Transverse colon (tissue), 4 donors: ENCODE measurements at regions of chr4 and their contacts with region 1.

Region 1: GRCh38 chr4:113394730-113395530 is 345.5 kb downstream of the ANK2 start:
- DNase-seq: peak; percentile 35
- H3K4me3 ChIP-seq: no peak overlapping the region
- H3K27ac ChIP-seq: no peak overlapping the region
- H3K4me1 ChIP-seq: peaks cover 0 to 8% (median 4%) of the 10 kb centered on the region in 4 donors
- H3K27me3 ChIP-seq: no peaks in the 10 kb centered on the region
- CTCF ChIP-seq: peak; percentile 84 to 90 (median 85)
- EP300 ChIP-seq: no peak
- POLR2A ChIP-seq: no peak

Region 2: GRCh38 chr4:113349430-113349829 is 45.5 kb before region 1 on chr4:
- in situ Hi-C with region 1: no loop called
- intact Hi-C with region 1: no loop called
- DNase-seq: no peak
- H3K4me3 ChIP-seq: no peak overlapping the region
- H3K27ac ChIP-seq: no peak overlapping the region
- H3K4me1 ChIP-seq: no peaks in the 10 kb centered on the region
- H3K27me3 ChIP-seq: no peaks in the 10 kb centered on the region
- CTCF ChIP-seq: no peak
- EP300 ChIP-seq: no peak
- POLR2A ChIP-seq: no peak

Region 3: GRCh38 chr4:113445286-113445685 is 50.4 kb after region 1 on chr4:
- in situ Hi-C with region 1: no loop called
- intact Hi-C with region 1: no loop called
- DNase-seq: peak; percentile 21
- H3K4me3 ChIP-seq: no peak overlapping the region
- H3K27ac ChIP-seq: peak overlapping the region; percentile 50 to 70 (median 62)
- H3K4me1 ChIP-seq: peaks cover 0 to 34% (median 8%) of the 10 kb centered on the region in 4 donors
- H3K27me3 ChIP-seq: no peaks in the 10 kb centered on the region
- CTCF ChIP-seq: no peak
- EP300 ChIP-seq: no peak
- POLR2A ChIP-seq: no peak

Region 4: DNA sequence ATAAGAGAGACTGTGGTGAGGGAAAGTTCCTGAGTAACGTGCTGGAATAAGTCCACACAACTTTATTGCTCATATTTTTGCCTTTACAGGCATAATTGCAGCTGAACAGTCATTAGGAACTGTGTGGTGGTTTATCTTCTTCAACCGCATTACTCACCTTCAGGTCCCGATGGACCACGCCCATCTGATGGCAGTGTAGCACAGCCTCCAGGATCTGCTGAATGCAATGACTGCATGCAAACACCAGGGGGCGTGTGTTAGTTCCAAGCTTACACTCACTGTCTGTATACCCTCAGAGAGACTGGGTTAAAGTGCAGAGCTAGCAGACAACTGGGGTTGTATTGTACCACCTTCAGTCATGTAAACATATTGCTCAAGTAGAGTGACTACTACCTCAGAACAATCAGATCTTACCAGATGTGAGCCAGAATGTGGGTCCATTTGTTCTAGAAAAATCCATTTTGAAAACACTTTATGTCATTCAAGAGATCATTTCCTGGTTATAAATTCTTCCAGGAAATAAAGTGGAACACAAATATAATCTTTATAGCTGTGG is 152.6 kb after region 1 on chr4:
- in situ Hi-C with region 1: no loop called
- intact Hi-C with region 1: loop called (anchors 10 kb)
- DNase-seq: peak; percentile 95
- H3K4me3 ChIP-seq: no peak overlapping the region
- H3K27ac ChIP-seq: peak overlapping the region; percentile 76 to 83 (median 80)
- H3K4me1 ChIP-seq: peaks cover 5 to 29% (median 20%) of the 10 kb centered on the region in 4 donors
- H3K27me3 ChIP-seq: no peaks in the 10 kb centered on the region
- CTCF ChIP-seq: peak; percentile 93 to 100 (median 97)
- EP300 ChIP-seq: no peak
- POLR2A ChIP-seq: peak; percentile 10

Region 5: GRCh38 chr4:113781439-113782040 is 386.6 kb after region 1 on chr4:
- in situ Hi-C with region 1: loop called in 1 of 4 experiments (anchors 25 kb)
- intact Hi-C with region 1: no loop called
- DNase-seq: no peak
- H3K4me3 ChIP-seq: no peak overlapping the region
- H3K27ac ChIP-seq: no peak overlapping the region
- H3K4me1 ChIP-seq: peaks cover 0 to 4% (median 0%) of the 10 kb centered on the region in 4 donors
- H3K27me3 ChIP-seq: no peaks in the 10 kb centered on the region
- CTCF ChIP-seq: peak; percentile 64 to 72 (median 68)
- EP300 ChIP-seq: no peak
- POLR2A ChIP-seq: no peak

Region 6: GRCh38 chr4:113945906-113946305 is 551.0 kb after region 1 on chr4:
- in situ Hi-C with region 1: loop called in 2 of 4 experiments (anchors 25 kb)
- intact Hi-C with region 1: no loop called
- DNase-seq: no peak
- H3K4me3 ChIP-seq: no peak overlapping the region
- H3K27ac ChIP-seq: no peak overlapping the region
- H3K4me1 ChIP-seq: peaks cover 0 to 11% (median 3%) of the 10 kb centered on the region in 4 donors
- H3K27me3 ChIP-seq: no peaks in the 10 kb centered on the region
- CTCF ChIP-seq: no peak
- EP300 ChIP-seq: no peak
- POLR2A ChIP-seq: no peak

Region 7: DNA sequence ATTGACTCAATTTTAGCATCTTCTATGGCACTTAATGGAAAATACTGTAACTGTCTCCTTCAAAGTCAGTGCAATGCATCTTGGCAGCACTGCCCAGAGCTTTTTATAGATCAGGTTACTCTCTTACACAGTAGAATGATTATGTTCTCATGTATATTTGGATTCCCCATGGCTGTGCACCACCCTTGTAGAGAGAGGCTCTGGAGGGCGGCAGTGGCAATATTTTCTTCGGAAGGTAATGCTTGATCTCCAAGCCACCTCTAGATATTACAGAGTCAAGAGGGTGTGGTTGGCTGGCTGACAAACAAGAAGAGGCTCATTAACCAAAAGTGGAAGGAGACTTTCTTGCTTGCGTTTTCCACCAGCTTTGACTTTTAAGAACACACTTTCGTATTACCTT is 657.3 kb after region 1 on chr4:
- in situ Hi-C with region 1: loop called in 2 of 4 experiments (anchors 25 kb)
- intact Hi-C with region 1: no loop called
- DNase-seq: no peak
- H3K4me3 ChIP-seq: no peak overlapping the region
- H3K27ac ChIP-seq: no peak overlapping the region
- H3K4me1 ChIP-seq: no peaks in the 10 kb centered on the region
- H3K27me3 ChIP-seq: no peaks in the 10 kb centered on the region
- CTCF ChIP-seq: no peak
- EP300 ChIP-seq: no peak
- POLR2A ChIP-seq: no peak

Region 8: GRCh38 chr4:114378306-114378903 is 983.5 kb after region 1 on chr4:
- in situ Hi-C with region 1: loop called (anchors 25 kb)
- intact Hi-C with region 1: loop called (anchors 5 kb)
- DNase-seq: no peak
- H3K4me3 ChIP-seq: no peak overlapping the region
- H3K27ac ChIP-seq: no peak overlapping the region
- H3K4me1 ChIP-seq: no peaks in the 10 kb centered on the region
- H3K27me3 ChIP-seq: no peaks in the 10 kb centered on the region
- CTCF ChIP-seq: peak in 1 of 5 experiments; percentile 18
- EP300 ChIP-seq: no peak
- POLR2A ChIP-seq: no peak

Region 9: GRCh38 chr4:114659386-114660008 is 1264.6 kb after region 1 on chr4:
- in situ Hi-C with region 1: loop called in 1 of 4 experiments (anchors 25 kb)
- intact Hi-C with region 1: no loop called
- DNase-seq: peak; percentile 70
- H3K4me3 ChIP-seq: no peak overlapping the region
- H3K27ac ChIP-seq: no peak overlapping the region
- H3K4me1 ChIP-seq: peaks cover 0 to 7% (median 0%) of the 10 kb centered on the region in 4 donors
- H3K27me3 ChIP-seq: no peaks in the 10 kb centered on the region
- CTCF ChIP-seq: peak; percentile 72 to 80 (median 76)
- EP300 ChIP-seq: no peak
- POLR2A ChIP-seq: no peak